Activated CD4-positive, alpha-beta T cell treated with anti-CD3 and anti-CD28 coated beads, Interleukin-2, amount 10 ng/mL, durations not matched to agents 7 days and 5 days (primary cell): ENCODE measurements at regions of chr10 and their contacts with region 1.

Region 1: DNA sequence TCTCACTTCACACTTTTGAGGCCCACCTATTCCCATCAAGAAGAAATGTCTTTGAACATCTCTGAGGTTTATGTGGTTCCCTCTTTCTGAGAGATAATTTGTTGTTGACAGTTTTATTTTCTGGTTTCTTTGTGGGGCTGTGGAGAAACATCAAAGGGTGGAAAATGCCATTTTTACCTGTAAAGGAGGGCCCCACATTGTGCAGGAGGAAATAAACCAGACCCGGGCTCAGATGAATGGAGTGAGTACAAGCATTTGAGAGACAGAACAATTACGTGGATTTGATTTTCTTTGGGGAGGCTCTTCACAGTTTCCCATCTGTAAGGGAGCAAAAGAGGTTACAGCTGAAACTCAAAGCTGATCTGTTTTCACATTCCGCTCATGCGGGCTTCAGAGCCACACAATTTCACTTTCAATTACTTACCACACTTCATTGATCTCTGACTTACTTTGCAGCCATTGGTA is 29.8 kb downstream of the ITPRIP start:
- DNase-seq: peak; percentile 65
- H3K4me3 Mint-ChIP-seq: peak overlapping the region; percentile 53
- H3K27ac Mint-ChIP-seq: peak overlapping the region; percentile 89
- H3K4me1 Mint-ChIP-seq: peaks cover 78% of the 10 kb centered on the region
- H3K27me3 Mint-ChIP-seq: no peaks in the 10 kb centered on the region

Region 2: GRCh38 chr10:104291439-104291951 is 17.0 kb before region 1 on chr10:
- CTCF ChIA-PET with region 1: interaction called, 44 read pairs
- POLR2A ChIA-PET with region 1: no interaction called
- DNase-seq: peak; percentile 89
- H3K4me3 Mint-ChIP-seq: no peak overlapping the region
- H3K27ac Mint-ChIP-seq: no peak overlapping the region
- H3K4me1 Mint-ChIP-seq: peaks cover 14% of the 10 kb centered on the region
- H3K27me3 Mint-ChIP-seq: peaks cover 18% of the 10 kb centered on the region

Region 3: DNA sequence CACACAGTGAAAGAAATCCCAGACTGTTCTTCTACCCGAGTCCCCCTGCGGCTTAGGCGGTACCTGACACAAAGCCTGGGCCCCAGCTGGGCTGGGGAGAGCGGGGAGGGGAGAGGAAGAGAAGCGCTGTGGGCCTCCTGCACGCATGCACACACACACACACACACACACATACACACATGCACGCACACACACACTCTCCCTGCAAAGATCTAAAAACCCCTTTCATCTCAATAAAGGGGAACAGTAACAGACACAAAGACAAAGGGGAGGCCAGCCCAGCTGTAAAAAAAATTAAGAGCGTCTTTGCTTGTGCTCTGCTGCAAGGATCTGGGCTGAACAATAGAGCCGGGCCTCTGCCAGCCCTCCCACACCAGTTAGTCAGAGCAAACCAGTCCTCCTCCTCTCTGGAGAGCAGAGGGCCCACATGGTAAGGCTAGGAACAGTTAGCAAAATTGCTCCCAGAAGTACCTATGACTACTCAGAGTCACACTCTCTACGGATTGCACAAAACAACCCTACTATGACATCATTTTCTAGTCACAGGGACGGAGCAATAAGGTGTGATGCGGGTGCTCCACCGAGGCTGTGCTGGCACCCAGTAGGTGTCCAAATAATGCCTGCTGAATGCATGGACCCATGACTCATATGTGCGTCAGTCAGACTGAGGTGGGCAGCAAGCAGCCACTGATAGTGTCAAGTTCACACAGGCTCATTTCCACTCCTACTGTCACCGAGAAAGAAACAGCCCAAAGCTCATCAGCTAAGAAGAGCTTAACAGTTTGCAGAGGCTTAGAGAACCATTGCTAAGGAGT is 20.6 kb after region 1 on chr10:
- CTCF ChIA-PET with region 1: interaction called, 10 read pairs
- POLR2A ChIA-PET with region 1: no interaction called
- DNase-seq: peak; percentile 72
- H3K4me3 Mint-ChIP-seq: peak overlapping the region; percentile 71
- H3K27ac Mint-ChIP-seq: peak overlapping the region; percentile 90
- H3K4me1 Mint-ChIP-seq: peaks cover 98% of the 10 kb centered on the region
- H3K27me3 Mint-ChIP-seq: no peaks in the 10 kb centered on the region

Region 4: DNA sequence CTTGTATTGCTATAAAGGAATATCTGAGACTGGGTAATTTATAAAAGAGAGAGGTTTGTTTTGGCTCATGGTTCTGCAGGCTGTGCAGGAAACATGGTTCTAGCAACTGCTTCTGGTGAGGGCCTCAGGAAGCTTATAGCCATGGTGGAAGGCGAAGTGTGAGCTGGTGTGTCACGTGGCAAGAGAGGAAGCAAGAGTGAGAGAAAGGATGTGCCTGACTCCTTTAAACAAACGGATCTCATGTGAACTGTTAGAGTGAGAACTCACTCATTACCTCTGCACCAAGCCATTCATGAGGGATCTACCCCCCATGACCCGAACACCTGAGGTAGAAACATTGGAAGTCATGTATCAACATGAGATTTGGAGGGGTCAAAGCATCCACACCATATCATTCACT is 37.5 kb after region 1 on chr10:
- CTCF ChIA-PET with region 1: interaction called, 47 read pairs
- POLR2A ChIA-PET with region 1: interaction called, 8 read pairs
- DNase-seq: no peak
- H3K4me3 Mint-ChIP-seq: no peak overlapping the region
- H3K27ac Mint-ChIP-seq: no peak overlapping the region
- H3K4me1 Mint-ChIP-seq: peaks cover 13% of the 10 kb centered on the region
- H3K27me3 Mint-ChIP-seq: no peaks in the 10 kb centered on the region